ENCODE measurements at regions of chr7 and their contacts with region 1.

Region 1: GRCh38 chr7:107150375-107151073 is 18.3 kb upstream of the HBP1 start:
- DNase-seq: no peak
- H3K4me3 ChIP-seq: no peak overlapping the region
- CTCF ChIP-seq: peak; percentile 41

Region 2: GRCh38 chr7:106793015-106793975 is 357.2 kb before region 1 on chr7:
- CTCF ChIA-PET with region 1: interaction called, 113 read pairs
- POLR2A ChIA-PET with region 1: no interaction called
- DNase-seq: no peak
- H3K4me3 ChIP-seq: no peak overlapping the region
- CTCF ChIP-seq: peak; percentile 20

Region 3: DNA sequence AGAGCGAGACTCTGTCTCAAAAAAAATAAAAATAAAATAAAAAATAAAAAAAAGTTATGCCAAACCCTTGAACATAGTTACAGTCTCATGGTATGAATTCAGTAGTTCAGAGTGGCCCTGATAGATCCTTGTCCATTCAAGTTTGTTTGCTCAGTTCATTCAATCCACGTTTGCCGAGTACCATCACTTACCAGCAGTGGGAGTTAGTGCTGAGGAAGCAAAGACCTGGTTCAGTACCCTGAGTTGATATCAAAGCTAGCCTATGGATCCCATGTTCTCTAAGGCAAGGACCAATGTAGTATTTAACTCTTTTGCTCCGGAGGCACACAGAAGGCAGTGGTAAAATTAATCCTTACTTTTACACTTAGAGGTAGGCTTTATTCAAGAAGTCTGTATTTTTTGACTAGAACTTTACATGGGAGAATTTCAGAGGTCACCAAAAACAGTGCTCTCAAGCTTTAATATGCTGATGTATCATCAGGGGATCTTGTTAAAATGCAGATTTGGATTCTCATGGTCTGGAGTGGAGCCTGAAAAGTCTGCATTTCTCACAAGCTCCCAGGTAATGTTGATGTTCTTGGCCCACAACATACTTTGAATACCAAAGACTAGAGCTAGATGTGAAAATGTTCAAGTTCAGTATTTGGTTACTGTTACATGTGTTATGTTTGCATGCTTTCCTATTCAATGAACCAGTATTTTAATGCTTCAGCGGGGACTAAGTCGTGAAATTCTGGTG is 19.9 kb before region 1 on chr7:
- CTCF ChIA-PET with region 1: interaction called, 135 read pairs
- POLR2A ChIA-PET with region 1: no interaction called
- DNase-seq: no peak
- H3K4me3 ChIP-seq: no peak overlapping the region
- CTCF ChIP-seq: no peak

Region 4: DNA sequence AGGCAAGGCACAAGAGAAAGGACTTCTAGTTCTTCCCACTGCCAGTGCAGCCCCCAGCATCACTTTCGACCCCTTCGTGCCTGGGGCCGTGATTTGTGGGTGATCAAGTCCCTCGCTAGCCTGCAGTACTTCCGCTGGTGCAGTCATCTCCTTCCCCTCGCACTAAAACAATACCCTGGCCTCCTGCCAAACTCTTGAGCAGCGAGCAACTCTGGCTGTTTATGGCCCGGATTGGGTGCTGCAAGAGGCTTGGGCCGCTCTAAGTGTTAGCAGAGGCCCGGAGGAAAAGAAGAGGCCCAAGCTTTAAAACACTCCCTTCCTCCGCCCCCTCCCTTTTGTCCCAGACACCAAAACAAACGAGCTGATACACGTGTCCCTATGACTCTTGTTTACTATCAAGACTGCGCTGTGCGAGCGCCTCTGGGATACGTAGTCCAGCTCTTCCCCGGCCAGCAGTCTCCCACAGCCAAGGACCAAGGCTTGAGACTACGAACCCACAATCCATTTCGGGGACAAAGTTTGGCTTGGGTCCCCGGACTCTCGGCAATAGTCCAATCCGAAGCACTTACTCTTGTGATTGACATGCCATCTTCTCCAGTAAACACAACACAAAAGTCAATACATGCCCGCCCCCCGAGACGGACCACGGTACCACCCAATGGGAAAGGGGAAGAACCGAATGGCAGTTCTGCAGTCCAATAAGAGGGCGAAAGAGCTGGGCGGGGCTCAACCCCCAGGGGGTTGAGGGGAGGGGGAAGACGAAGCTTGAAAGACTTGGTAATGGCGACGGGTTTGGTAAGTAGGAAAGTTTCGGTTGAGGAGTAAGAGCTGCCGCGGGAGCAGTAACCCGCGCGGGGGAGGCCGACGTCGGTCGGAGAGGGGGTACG is 18.0 kb after region 1 on chr7 and contains the start of gene HBP1:
- CTCF ChIA-PET with region 1: interaction called, 140 read pairs
- POLR2A ChIA-PET with region 1: interaction called, 3 read pairs
- DNase-seq: peak; percentile 100
- H3K4me3 ChIP-seq: peak within 1 kb of the TSS; percentile 95
- CTCF ChIP-seq: no peak

Region 5: GRCh38 chr7:107890962-107891635 is 740.6 kb after region 1 on chr7 and contains the start of gene DLD:
- CTCF ChIA-PET with region 1: no interaction called
- POLR2A ChIA-PET with region 1: no interaction called
- DNase-seq: peak; percentile 40
- H3K4me3 ChIP-seq: peak within 1 kb of the TSS; percentile 93
- CTCF ChIP-seq: no peak

Region 6: GRCh38 chr7:108014747-108015682 is 864.5 kb after region 1 on chr7:
- CTCF ChIA-PET with region 1: no interaction called
- POLR2A ChIA-PET with region 1: no interaction called
- DNase-seq: no peak
- H3K4me3 ChIP-seq: no peak overlapping the region
- CTCF ChIP-seq: no peak

Measured in AG04449 (cell line).